HEK293 (cell line): ENCODE measurements at regions of chr16 and their contacts with region 1.

Region 1: DNA sequence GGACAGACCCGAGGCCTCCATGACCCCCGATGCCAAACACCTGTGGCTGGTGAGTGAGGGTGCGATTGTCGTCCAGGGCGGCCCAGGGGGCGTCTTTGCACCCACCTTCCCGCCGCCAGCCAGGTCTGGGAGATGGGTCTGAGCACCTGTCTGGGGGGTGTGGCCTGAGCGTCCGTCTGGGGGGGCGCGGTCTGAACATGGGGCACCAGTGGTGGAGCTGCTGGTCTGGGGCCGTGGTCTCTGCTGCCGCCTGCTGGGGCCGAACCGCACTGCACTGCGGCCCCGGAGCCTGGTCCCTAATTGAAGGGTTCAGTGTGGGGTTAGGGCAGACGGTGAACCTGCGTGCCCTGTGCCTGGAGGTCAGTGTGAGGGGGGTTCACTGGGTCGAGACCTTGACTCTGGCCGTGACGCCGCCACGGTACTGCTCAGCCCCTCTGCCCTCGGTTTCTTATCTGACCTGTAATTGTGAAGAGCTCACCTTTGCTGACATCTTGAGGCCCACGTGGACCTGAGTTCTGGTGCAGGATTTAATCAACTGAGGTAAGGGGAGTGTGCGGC is 12.6 kb upstream of the TCF25 start:
- H3K4me3 ChIP-seq: no peak overlapping the region
- H3K27ac ChIP-seq: no peak overlapping the region
- H3K4me1 ChIP-seq: no peaks in the 10 kb centered on the region
- CTCF ChIP-seq: peak; percentile 95

Region 2: GRCh38 chr16:89791278-89791995 is 69.4 kb before region 1 on chr16:
- CTCF ChIA-PET with region 1: interaction called, 32 read pairs
- POLR2A ChIA-PET with region 1: interaction called, 4 read pairs
- H3K4me3 ChIP-seq: no peak overlapping the region
- H3K27ac ChIP-seq: no peak overlapping the region
- H3K4me1 ChIP-seq: no peaks in the 10 kb centered on the region
- CTCF ChIP-seq: no peak

Region 3: DNA sequence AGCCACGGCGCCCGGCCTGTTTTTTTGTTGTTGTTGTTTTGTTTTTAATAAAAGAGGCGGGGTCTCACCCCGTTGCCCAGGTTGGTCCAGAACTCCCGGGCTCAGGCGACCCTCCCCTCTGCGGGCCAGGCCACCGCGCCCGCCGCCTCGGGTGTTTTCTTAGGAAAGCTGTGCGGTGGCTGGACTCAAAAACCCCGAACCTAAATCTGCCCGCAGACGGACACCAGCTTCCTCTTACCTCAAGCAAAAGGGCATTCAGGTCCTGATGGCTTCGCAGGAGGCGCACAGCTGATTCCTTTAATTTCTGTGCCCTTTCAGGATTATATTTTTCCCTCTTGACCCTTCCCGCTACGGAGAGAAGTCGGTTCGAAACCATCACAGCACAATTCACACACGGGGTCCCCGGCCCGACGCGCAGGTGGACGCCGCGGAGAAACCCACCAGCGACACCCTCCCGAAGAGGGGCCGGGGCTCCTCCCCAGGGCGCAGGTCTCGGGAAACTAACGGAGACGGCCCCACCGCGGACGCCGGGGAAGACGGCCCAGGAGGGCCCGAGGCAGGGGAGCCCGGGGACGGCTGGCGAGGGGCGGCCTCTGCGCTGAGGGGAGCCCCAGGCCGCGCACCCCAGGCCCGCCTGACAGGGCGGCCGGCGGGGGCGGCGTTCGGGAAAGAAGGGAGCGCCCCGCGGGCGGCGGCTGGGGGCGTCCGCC is 45.0 kb before region 1 on chr16:
- CTCF ChIA-PET with region 1: interaction called, 11 read pairs
- POLR2A ChIA-PET with region 1: interaction called, 9 read pairs
- H3K4me3 ChIP-seq: peak overlapping the region; percentile 73
- H3K27ac ChIP-seq: peak overlapping the region; percentile 89
- H3K4me1 ChIP-seq: no peaks in the 10 kb centered on the region
- CTCF ChIP-seq: no peak